Right lobe of liver (tissue), 6 donors: ENCODE measurements at regions of chr15 and their contacts with region 1.

Region 1: DNA sequence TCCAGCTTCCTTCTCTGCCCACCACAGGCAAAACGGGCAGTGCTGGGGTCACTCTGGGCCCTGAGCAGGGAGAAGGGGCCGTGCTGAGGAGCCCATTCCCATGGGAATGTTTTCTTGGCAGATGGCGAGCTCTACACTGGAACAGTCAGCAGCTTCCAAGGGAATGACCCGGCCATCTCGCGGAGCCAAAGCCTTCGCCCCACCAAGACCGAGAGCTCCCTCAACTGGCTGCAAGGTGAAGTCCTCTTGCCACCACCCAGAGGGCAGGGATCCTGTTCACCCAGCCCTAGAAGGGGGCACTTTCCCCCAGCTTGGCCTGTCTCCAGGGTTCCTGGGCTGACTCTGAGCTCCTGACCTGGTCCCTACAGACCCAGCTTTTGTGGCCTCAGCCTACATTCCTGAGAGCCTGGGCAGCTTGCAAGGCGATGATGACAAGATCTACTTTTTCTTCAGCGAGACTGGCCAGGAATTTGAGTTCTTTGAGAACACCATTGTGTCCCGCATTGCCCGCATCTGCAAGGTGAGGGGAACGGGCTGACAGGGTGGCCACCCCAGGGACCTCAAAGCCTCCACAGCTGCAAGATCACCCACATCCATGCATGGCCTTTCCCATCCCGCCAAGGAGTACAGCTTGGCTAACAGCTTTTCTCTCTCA is 12.4 kb downstream of the CIB1 start:
- DNase-seq: peak; percentile 77 to 88 (median 87)
- ATAC-seq: peak; percentile 85 to 97 (median 92)
- H3K4me3 ChIP-seq: no peak overlapping the region
- H3K27ac ChIP-seq: peak overlapping the region in 2 of 3 donors; percentile 50 to 63
- H3K4me1 ChIP-seq: peaks cover 0 to 11% (median 0%) of the 10 kb centered on the region in 4 donors
- H3K27me3 ChIP-seq: no peaks in the 10 kb centered on the region
- CTCF ChIP-seq: peak; percentile 65 to 88 (median 79)
- POLR2A ChIP-seq: no peak

Region 2: GRCh38 chr15:90143166-90143655 is 78.2 kb before region 1 on chr15:
- intact Hi-C with region 1: loop called in 1 of 2 experiments (anchors 10 kb)
- DNase-seq: peak; percentile 78 to 83 (median 81)
- ATAC-seq: peak; percentile 84 to 92 (median 89)
- H3K4me3 ChIP-seq: no peak overlapping the region
- H3K27ac ChIP-seq: peak overlapping the region; percentile 38 to 63 (median 56)
- H3K4me1 ChIP-seq: peaks cover 0 to 24% (median 9%) of the 10 kb centered on the region in 4 donors
- H3K27me3 ChIP-seq: no peaks in the 10 kb centered on the region
- CTCF ChIP-seq: peak; percentile 69 to 90 (median 80)
- POLR2A ChIP-seq: no peak

Region 3: GRCh38 chr15:90165659-90166421 is 55.5 kb before region 1 on chr15:
- intact Hi-C with region 1: loop called (anchors 10 kb)
- DNase-seq: peak; percentile 70 to 93 (median 75)
- ATAC-seq: peak; percentile 67 to 85 (median 76)
- H3K4me3 ChIP-seq: no peak overlapping the region
- H3K27ac ChIP-seq: peak overlapping the region; percentile 34 to 75 (median 57)
- H3K4me1 ChIP-seq: peaks cover 0 to 27% (median 7%) of the 10 kb centered on the region in 4 donors
- H3K27me3 ChIP-seq: no peaks in the 10 kb centered on the region
- CTCF ChIP-seq: no peak
- POLR2A ChIP-seq: peak; percentile 50